SK-N-SH (cell line): ENCODE measurements at regions of chr11 and their contacts with region 1.

Region 1: GRCh38 chr11:1908618-1909017 is 10.9 kb upstream of the TNNT3 start:
- DNase-seq: no peak
- H3K4me3 ChIP-seq: no peak overlapping the region
- H3K27ac ChIP-seq: no peak overlapping the region
- H3K4me1 ChIP-seq: no peaks in the 10 kb centered on the region; a peak in 1 of 4 replicates
- H3K27me3 ChIP-seq: 0 out of 2 replicates have a peak, but pooled peaks cover 17% of the 10 kb centered on the region
- CTCF ChIP-seq: no peak
- EP300 ChIP-seq: no peak
- RAD21 ChIP-seq: no peak

Region 2: GRCh38 chr11:1896923-1897322 is 11.7 kb before region 1 on chr11:
- CTCF ChIA-PET with region 1: interaction called, 16 read pairs
- POLR2A ChIA-PET with region 1: no interaction called
- DNase-seq: no peak
- H3K4me3 ChIP-seq: no peak overlapping the region
- H3K27ac ChIP-seq: no peak overlapping the region
- H3K4me1 ChIP-seq: no peaks in the 10 kb centered on the region
- H3K27me3 ChIP-seq: no peaks in the 10 kb centered on the region; the same call in 1 of the 2 replicates
- CTCF ChIP-seq: no peak
- EP300 ChIP-seq: no peak
- RAD21 ChIP-seq: no peak